ENCODE measurements at regions of chr10 and their contacts with region 1.

Region 1: DNA sequence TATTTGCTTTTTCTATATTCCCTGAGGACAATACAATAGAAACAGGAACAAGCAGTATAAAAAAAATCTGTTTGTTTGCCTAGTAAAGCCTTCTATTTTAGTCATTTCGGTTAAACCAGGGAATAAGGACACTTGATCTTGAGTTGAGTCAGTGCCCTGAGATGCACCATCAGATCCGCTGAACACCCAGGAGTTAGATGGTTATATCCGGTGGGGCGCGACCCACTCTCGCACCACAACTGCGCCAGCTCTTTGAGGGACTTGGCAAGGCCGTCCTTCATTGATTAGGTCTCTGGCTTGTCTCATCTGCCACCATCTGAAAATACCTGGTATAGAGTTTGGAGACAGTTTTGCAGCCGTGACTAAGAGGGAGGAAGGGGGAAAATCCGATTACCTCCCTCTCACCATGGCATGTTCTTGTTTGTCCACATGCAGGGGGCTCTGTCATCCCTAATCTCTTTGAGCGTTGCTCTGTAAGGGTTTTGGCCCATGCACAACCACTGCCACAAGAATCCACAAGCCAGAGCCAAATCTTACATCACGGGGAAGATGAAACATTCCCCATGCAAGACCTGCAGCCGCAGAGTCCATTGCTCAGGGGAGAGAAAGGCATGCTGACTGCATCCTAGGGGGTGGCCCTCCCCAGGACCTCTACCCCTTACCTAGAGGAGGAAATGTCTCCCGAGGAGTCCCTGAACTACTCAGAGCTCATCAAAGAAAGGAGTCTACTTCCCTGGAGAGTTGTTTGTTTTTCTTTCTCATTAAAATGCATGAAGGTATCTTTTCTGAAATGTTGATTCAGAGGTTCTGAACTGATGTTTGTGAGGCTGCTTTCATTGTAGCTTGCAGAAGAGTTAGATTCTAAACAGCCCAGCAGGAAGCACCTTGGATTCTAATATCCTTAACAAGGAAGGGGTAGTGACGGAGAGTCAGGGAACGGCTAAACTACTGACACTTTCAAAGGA is 101.6 kb upstream of the FAM171A1 start:
- DNase-seq: peak in 1 of 2 donors; percentile 5
- ATAC-seq: peak in 6 of 8 donors; percentile 24 to 54 (median 42)
- H3K4me3 ChIP-seq: no peak overlapping the region
- H3K27ac ChIP-seq: no peak overlapping the region
- H3K4me1 ChIP-seq: peaks cover 0 to 22% (median 12%) of the 10 kb centered on the region in 9 donors
- H3K27me3 ChIP-seq: peaks cover 0 to 4% (median 0%) of the 10 kb centered on the region in 7 donors
- CTCF ChIP-seq: no peak

Region 2: GRCh38 chr10:15262036-15262713 is 210.5 kb before region 1 on chr10:
- intact Hi-C with region 1: no loop called
- DNase-seq: peak in 1 of 2 donors; percentile 27
- ATAC-seq: peak in 7 of 8 donors; percentile 53 to 79 (median 64)
- H3K4me3 ChIP-seq: no peak overlapping the region
- H3K27ac ChIP-seq: no peak overlapping the region
- H3K4me1 ChIP-seq: peaks cover 0 to 11% (median 0%) of the 10 kb centered on the region in 9 donors
- H3K27me3 ChIP-seq: no peaks in the 10 kb centered on the region
- CTCF ChIP-seq: peak; percentile 16 to 60 (median 35)

Region 3: DNA sequence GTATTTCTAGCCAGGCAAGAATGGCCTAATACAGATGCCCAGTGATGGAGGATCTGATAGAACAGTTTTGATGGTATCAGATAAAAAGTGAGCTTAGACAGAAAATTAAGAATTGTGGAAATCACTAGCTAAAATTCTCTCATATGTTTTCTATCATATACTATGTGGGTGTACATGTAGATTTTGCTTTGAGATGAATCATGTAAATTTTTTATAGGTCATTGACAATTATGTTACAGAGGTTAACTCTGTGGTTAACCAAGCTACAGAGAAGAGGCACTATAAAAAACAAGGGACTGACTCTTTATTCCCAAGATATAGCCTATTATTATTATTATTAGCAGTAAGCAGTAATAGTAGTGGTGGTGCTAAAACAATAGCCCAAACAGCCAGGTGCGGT is 90.5 kb after region 1 on chr10:
- intact Hi-C with region 1: loop called in 1 of 10 experiments (anchors 10 kb)
- DNase-seq: no peak
- ATAC-seq: no peak
- H3K4me3 ChIP-seq: no peak overlapping the region
- H3K27ac ChIP-seq: no peak overlapping the region
- H3K4me1 ChIP-seq: no peaks in the 10 kb centered on the region
- H3K27me3 ChIP-seq: no peaks in the 10 kb centered on the region
- CTCF ChIP-seq: no peak